ENCODE measurements at regions of chr1 and their contacts with region 1.

Region 1: DNA sequence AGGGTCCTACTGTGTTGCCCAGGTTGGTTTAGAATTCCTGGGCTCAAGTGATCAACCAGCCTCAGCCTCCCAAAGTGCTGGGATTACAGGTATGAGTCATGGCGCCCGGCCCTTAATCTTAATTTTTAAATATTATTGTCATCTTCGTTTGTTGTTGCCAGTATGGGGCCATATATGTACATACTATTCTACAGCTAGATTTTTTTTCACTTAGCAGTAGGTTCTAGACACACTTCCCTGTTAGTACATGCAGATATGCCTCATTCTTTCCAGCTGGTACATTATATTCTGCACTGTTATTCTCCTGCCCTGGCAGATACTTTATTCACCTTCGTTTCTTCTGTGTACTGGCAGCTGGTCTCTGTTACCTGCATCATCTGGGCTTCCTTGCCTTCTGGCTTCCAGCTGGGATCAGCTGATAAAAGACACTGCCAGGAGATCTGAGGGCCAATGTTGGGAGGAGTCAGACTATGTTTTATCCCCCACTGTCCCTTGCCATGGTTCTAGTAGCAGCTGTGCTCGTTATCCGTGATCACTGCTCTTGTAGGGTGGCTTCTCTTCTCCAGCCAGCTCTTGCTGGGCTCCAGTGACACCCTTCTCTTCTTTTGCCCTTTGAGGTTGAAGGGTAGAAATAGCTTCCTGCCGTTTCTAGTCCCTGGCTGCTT is 24.7 kb downstream of the ST3GAL3 start:
- DNase-seq: no peak
- ATAC-seq: no peak
- H3K4me3 Mint-ChIP-seq: no peak overlapping the region
- H3K27ac Mint-ChIP-seq: no peak overlapping the region
- H3K4me1 Mint-ChIP-seq: peaks cover 2% of the 10 kb centered on the region
- H3K27me3 Mint-ChIP-seq: no peaks in the 10 kb centered on the region
- CTCF ChIP-seq: no peak

Region 2: DNA sequence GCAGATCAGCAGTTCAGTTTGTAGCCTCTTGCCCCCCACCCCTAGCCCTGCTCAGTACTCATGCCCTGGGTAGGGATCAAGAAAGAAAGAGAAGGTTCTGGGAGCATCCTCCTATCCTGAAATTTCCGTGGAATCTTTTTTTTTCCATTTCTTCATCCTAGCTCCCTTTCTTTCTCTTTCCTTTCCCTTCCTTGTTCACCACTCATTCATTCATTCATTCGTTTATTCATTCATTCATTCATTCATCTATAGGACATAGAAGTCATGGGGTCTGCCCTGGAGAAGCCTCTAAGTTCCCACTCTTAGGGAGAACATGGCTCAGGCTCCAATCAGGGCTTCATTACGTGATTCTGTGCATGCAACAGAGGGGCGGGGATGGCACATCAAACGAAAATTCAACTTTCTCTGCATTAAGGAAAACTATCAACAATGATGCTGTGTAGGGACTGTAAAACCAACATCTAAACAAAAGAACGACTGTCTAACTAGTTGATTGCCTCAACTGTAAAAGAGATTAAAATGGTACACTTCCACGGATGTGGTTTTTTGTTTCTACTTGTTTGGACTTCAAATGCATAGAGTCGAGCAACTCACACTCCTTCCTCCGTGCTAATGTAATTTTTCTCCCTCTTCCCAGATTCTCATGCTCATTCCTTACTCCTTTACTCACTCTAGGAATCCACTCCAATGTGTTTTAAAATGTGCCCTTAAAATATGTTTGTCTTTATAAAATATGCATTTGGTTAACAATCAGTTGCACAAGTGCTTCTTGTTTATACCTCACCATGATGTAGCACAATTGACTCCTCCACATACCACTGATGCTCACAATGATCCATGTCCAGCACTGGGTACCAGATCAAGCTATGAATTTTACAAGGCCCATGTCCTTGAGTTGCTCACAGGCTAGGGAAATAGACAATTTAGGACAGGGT is 672.1 kb before region 1 on chr1:
- CTCF ChIA-PET with region 1: no interaction called
- POLR2A ChIA-PET with region 1: interaction called, 16 read pairs
- intact Hi-C with region 1: no loop called
- DNase-seq: no peak
- ATAC-seq: no peak
- H3K4me3 Mint-ChIP-seq: no peak overlapping the region
- H3K27ac Mint-ChIP-seq: no peak overlapping the region
- H3K4me1 Mint-ChIP-seq: peaks cover 4% of the 10 kb centered on the region
- H3K27me3 Mint-ChIP-seq: peaks cover 6% of the 10 kb centered on the region
- CTCF ChIP-seq: no peak